Psoas muscle (tissue), 8 donors: ENCODE measurements at regions of chr6 and their contacts with region 1.

Region 1: GRCh38 chr6:135909737-135910387 is 58.4 kb downstream of the PDE7B start:
- DNase-seq: no peak
- ATAC-seq: peak in 2 of 4 donors; percentile 47 to 68
- H3K4me3 ChIP-seq: no peak overlapping the region
- H3K27ac ChIP-seq: no peak overlapping the region
- H3K4me1 ChIP-seq: no peaks in the 10 kb centered on the region
- H3K27me3 ChIP-seq: no peaks in the 10 kb centered on the region
- CTCF ChIP-seq: peak; percentile 50

Region 2: GRCh38 chr6:135180542-135181332 is 729.1 kb before region 1 on chr6 and contains the start of gene MYB:
- intact Hi-C with region 1: no loop called
- DNase-seq: peak; percentile 40 to 72
- ATAC-seq: peak; percentile 77 to 87 (median 83)
- H3K4me3 ChIP-seq: peak within 1 kb of the TSS; percentile 75
- H3K27ac ChIP-seq: no peak within 1 kb of the TSS
- H3K4me1 ChIP-seq: peaks cover 21% of the 10 kb centered on the region
- H3K27me3 ChIP-seq: peaks cover 0 to 43% (median 14%) of the 10 kb centered on the region in 3 donors
- CTCF ChIP-seq: no peak
- total RNA-seq, gene MYB: 0.28 TPM in 1 of 4 donors, not detected in the others

Region 3: GRCh38 chr6:135851442-135852271 is 58.2 kb before region 1 on chr6 and contains the start of gene PDE7B:
- intact Hi-C with region 1: loop called in 1 of 2 experiments (anchors 5 kb)
- DNase-seq: peak; percentile 83 to 93
- ATAC-seq: peak; percentile 94 to 98 (median 96)
- H3K4me3 ChIP-seq: peak within 1 kb of the TSS; percentile 66
- H3K27ac ChIP-seq: peak within 1 kb of the TSS; percentile 68
- H3K4me1 ChIP-seq: peaks cover 17% of the 10 kb centered on the region
- H3K27me3 ChIP-seq: no peaks in the 10 kb centered on the region
- CTCF ChIP-seq: no peak
- total RNA-seq, gene PDE7B: 2.7 to 4.6 (median 4.3) TPM

Region 4: DNA sequence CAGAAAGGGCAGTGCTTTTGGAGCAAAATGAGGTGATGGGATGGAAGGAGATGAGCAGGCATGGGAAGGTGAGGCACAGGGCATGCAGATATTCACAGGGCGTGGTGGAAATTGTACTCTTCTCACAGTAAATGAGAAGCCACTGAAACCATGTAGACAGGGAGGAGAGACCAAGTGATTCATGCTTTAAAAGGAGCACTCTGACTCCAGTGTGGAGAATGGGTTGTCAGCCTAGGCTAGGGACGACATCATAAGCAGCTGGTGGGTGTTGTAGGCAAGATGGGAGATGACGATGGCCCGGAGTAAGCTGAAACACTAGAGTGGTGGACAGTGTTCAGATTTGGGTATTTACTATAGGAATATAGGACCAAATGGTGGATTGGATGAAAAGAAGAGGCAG is 40.0 kb before region 1 on chr6:
- intact Hi-C with region 1: loop called in 1 of 2 experiments (anchors 5 kb)
- DNase-seq: no peak
- ATAC-seq: peak; percentile 31 to 71 (median 57)
- H3K4me3 ChIP-seq: no peak overlapping the region
- H3K27ac ChIP-seq: no peak overlapping the region
- H3K4me1 ChIP-seq: peaks cover 6% of the 10 kb centered on the region
- H3K27me3 ChIP-seq: no peaks in the 10 kb centered on the region
- CTCF ChIP-seq: no peak